ENCODE measurements at regions of chr1 and their contacts with region 1.

Region 1: DNA sequence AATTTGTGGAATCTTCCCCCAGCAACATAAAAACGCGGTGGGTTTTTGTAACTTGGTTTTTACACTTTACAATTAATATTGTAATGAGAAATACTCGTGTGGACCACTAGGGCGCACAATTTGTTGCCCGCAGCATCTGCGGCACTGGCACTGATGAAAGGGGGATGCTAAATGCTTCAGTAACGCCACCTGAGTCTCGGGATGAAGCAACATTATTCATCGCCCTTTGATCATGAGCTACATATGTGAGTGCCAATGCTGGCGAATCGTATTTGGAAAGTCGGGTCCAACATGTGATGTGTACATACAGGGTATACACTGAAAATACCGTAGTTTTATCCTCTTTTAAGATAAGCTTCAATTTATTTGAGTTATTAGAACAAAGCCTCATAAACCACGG is 34.2 kb upstream of the COX20 start:
- DNase-seq: no peak
- H3K4me3 ChIP-seq: no peak overlapping the region
- CTCF ChIP-seq: peak; percentile 52

Region 2: GRCh38 chr1:244599937-244600350 is 201.3 kb before region 1 on chr1:
- in situ Hi-C with region 1: loop called (anchors 5 kb)
- DNase-seq: peak; percentile 90
- H3K4me3 ChIP-seq: peak overlapping the region; percentile 24
- CTCF ChIP-seq: no peak